ENCODE measurements at regions of chr19 and their contacts with region 1.

Region 1: DNA sequence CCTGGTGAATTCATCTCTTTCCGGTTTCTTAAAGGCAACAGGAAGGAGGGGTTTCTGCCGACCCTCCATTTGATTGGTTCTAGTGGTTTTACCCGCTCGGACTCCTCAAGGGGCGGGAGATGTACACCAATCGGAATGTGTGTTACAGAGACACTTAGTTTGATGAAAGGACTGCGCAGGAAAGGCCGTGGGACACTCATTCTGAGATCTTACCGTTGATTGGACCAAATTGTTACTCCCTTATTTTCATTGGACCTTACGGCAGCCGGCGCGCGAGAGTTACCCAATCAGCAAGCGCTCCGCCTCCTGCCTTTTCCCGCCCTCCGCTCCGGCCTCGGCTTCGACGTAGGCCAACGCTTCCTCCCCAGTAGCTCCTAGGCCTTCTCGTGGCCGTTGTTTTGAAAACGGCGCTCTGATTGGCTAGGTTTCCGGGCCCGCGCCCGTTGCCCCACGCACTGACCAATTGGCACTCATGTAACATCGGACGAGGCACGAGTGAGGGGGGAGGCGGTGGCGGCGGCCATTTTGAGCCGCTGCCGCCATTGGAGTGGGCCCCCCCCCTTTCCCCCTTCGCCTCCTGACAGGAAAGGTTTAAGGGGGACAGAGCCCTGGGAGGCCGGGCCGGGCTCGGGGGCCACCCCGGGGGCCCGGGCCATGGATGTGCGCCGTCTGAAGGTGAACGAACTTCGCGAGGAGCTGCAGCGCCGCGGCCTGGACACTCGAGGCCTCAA is at the start of gene HNRNPUL1:
- DNase-seq: peak; percentile 99
- H3K4me3 Mint-ChIP-seq: peak within 1 kb of the TSS; percentile 97
- H3K27ac Mint-ChIP-seq: peak within 1 kb of the TSS; percentile 100
- H3K4me1 Mint-ChIP-seq: peaks cover 46% of the 10 kb centered on the region
- H3K27me3 Mint-ChIP-seq: peaks cover 4% of the 10 kb centered on the region
- total RNA-seq, gene HNRNPUL1: 290 to 295 TPM

Region 2: GRCh38 chr19:40750059-40750873 is 513.7 kb before region 1 on chr19 and contains the start of gene ACTMAP:
- CTCF ChIA-PET with region 1: no interaction called
- POLR2A ChIA-PET with region 1: no interaction called
- intact Hi-C with region 1: loop called (anchors 1 kb)
- DNase-seq: peak; percentile 100
- H3K4me3 Mint-ChIP-seq: peak within 1 kb of the TSS; percentile 94
- H3K27ac Mint-ChIP-seq: peak within 1 kb of the TSS; percentile 97
- H3K4me1 Mint-ChIP-seq: peaks cover 32% of the 10 kb centered on the region
- H3K27me3 Mint-ChIP-seq: no peaks in the 10 kb centered on the region
- total RNA-seq, gene ACTMAP: 14.1 to 15.8 TPM

Region 3: GRCh38 chr19:41123716-41124294 is 140.2 kb before region 1 on chr19:
- CTCF ChIA-PET with region 1: interaction called, 4 read pairs
- POLR2A ChIA-PET with region 1: no interaction called
- intact Hi-C with region 1: loop called (anchors 1 kb)
- DNase-seq: no peak
- H3K4me3 Mint-ChIP-seq: no peak overlapping the region
- H3K27ac Mint-ChIP-seq: no peak overlapping the region
- H3K4me1 Mint-ChIP-seq: peaks cover 23% of the 10 kb centered on the region
- H3K27me3 Mint-ChIP-seq: no peaks in the 10 kb centered on the region

Region 4: DNA sequence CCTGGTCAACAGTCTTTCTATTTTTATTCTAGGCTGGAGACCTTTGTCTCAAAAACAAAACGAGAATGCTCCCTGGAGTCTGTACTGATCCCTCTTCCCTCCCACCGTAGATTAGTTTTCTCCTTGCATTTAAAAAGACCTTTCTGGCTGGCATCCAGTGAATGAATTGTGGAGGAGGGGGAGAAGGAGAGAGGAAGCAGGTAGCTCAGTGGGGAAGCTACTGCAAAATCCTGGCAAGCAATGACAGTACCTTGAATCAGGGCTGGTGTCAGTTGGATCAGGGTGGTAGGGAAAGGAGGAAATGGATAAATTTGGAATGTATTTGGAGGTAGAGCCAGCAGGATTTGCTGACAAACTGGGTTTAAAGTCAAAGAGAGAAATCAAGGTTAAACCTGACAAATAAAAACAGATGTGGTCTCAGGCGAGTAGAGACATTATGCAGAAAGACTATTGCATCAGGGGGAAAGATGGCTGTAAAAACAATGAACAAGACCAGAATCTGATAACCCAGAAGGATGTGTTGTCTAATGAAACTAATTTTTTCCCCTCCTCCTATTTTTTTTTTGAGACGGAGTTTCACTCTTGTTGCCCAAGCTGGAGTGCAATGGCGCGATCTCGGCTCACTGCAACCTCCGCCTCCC is 74.5 kb before region 1 on chr19:
- CTCF ChIA-PET with region 1: no interaction called
- POLR2A ChIA-PET with region 1: no interaction called
- intact Hi-C with region 1: no loop called
- DNase-seq: no peak
- H3K4me3 Mint-ChIP-seq: no peak overlapping the region
- H3K27ac Mint-ChIP-seq: no peak overlapping the region
- H3K4me1 Mint-ChIP-seq: peaks cover 14% of the 10 kb centered on the region
- H3K27me3 Mint-ChIP-seq: peaks cover 35% of the 10 kb centered on the region

Region 5: GRCh38 chr19:41218615-41219507 is 45.2 kb before region 1 on chr19 and contains the start of gene AXL:
- CTCF ChIA-PET with region 1: no interaction called
- POLR2A ChIA-PET with region 1: no interaction called
- intact Hi-C with region 1: no loop called
- DNase-seq: no peak
- H3K4me3 Mint-ChIP-seq: no peak within 1 kb of the TSS
- H3K27ac Mint-ChIP-seq: no peak within 1 kb of the TSS
- H3K4me1 Mint-ChIP-seq: no peaks in the 10 kb centered on the region
- H3K27me3 Mint-ChIP-seq: peaks cover 23% of the 10 kb centered on the region
- total RNA-seq, gene AXL: 0.17 to 0.31 TPM

Region 6: GRCh38 chr19:41298348-41298964 is 34.4 kb after region 1 on chr19:
- CTCF ChIA-PET with region 1: interaction called, 23 read pairs
- POLR2A ChIA-PET with region 1: interaction called, 97 read pairs
- intact Hi-C with region 1: loop called (anchors 1 kb)
- DNase-seq: peak; percentile 48
- H3K4me3 Mint-ChIP-seq: no peak overlapping the region
- H3K27ac Mint-ChIP-seq: peak overlapping the region; percentile 85
- H3K4me1 Mint-ChIP-seq: peaks cover 94% of the 10 kb centered on the region
- H3K27me3 Mint-ChIP-seq: no peaks in the 10 kb centered on the region

Region 7: DNA sequence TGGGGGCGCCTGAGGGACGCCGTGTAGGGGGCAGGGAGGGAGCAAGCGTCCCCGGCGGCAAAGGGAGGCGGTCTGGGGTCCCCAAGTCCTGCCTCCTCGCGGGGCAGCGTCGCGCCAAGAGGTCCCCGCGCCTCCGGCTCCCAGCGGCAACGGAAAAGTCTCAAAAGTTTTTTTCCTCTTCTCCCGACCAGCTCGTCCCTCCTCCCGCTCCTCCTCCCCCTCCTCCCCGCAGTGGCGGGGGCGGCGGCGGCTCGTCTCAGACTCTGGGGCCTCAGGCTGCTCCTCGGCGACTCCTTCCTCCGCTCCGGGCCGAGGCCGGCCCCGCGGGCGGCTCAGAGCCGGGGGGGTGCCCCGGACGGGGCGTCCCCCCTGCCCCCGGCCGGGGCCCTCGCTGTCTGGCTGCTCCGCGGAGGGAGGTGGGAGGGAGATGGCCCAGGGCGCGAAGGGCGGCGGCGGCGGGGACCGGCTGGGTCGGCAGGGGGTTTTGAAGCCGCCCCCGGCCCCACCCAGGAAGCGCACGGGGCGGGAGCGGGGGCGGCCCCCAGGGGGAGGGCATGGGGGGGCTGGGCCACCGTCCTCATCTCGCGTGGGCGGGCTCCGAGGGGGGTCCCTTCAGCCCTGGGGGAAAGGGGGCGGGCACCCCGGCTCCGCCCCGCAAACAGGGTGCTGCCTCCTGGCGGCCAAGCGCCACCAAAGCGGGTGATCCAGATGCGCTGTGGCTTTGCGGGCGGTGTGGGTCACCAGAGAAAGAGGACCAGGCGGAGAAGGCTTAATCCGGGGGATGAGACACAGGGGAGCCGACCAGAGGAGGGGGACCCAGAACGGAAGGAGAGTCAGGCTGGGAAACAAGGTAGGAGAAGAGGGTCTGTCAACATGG is 89.7 kb after region 1 on chr19 and contains the start of gene TGFB1:
- CTCF ChIA-PET with region 1: interaction called, 7 read pairs
- POLR2A ChIA-PET with region 1: interaction called, 18 read pairs
- intact Hi-C with region 1: loop called (anchors 1 kb)
- DNase-seq: peak; percentile 94
- H3K4me3 Mint-ChIP-seq: peak within 1 kb of the TSS; percentile 95
- H3K27ac Mint-ChIP-seq: peak within 1 kb of the TSS; percentile 94
- H3K4me1 Mint-ChIP-seq: peaks cover 58% of the 10 kb centered on the region
- H3K27me3 Mint-ChIP-seq: no peaks in the 10 kb centered on the region
- total RNA-seq, gene TGFB1: 108 to 110 TPM

Region 8: GRCh38 chr19:41548954-41549688 is 285.1 kb after region 1 on chr19:
- CTCF ChIA-PET with region 1: no interaction called
- POLR2A ChIA-PET with region 1: interaction called, 7 read pairs
- intact Hi-C with region 1: loop called (anchors 2 kb)
- DNase-seq: peak; percentile 88
- H3K4me3 Mint-ChIP-seq: peak overlapping the region; percentile 98
- H3K27ac Mint-ChIP-seq: peak overlapping the region; percentile 96
- H3K4me1 Mint-ChIP-seq: peaks cover 61% of the 10 kb centered on the region
- H3K27me3 Mint-ChIP-seq: no peaks in the 10 kb centered on the region

Measured in activated CD4-positive, alpha-beta memory T cell treated with anti-CD3 and anti-CD28 coated beads for 36 hours (primary cell).